B cell (primary cell): ENCODE measurements at regions of chr9 and their contacts with region 1.

Region 1: DNA sequence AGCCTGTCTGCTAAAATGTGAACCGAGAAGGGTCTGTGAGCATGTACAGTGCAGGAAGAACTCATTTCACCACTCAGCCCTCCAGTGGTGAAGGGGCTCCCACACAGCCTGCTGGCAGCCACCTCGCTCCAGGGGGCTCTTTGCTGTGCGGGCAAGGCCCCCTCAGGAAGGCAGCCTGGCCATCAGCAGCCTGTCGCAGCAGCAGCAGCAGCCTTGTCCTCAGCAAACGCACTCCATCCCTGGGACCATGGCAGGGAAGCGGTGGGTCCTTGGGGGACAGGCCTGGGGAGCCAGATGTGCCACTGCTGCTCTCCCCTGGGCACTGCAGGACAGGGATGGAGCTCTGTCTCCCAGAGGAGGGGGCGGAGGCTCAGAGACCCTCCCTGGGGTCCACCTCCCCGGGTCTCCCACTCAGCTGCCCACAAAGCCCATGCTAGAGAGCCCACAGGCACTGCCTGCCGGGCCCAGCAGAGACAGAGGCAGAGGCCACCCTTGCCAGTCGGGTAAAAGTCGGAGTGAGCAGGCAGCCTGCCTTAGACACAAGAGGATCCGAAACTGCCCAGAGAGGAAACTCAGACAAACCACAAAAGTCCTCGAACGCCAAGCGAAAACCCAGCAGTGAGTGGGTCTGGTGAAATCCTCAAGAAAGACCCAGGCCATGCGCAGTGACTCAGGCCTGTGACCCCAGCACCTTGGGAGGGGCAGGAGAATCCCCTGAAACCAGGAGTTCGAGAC is 8.0 kb downstream of the BRD3 start:
- DNase-seq: peak; percentile 87
- ATAC-seq: peak; percentile 94
- H3K4me3 ChIP-seq: peak overlapping the region in 4 of 5 experiments; percentile 1 to 23 (median 12)
- H3K4me3 Mint-ChIP-seq: peak overlapping the region; percentile 60
- H3K27ac ChIP-seq: peak overlapping the region in 1 of 2 donors; percentile 54
- H3K27ac Mint-ChIP-seq: peak overlapping the region; percentile 56
- H3K4me1 ChIP-seq: peaks cover 41 to 60% of the 10 kb centered on the region in 2 donors
- H3K4me1 Mint-ChIP-seq: peaks cover 71% of the 10 kb centered on the region
- H3K27me3 ChIP-seq: no peaks in the 10 kb centered on the region
- H3K27me3 Mint-ChIP-seq: no peaks in the 10 kb centered on the region
- CTCF ChIP-seq: peak; percentile 11

Region 2: GRCh38 chr9:134024828-134025605 is 34.8 kb before region 1 on chr9 and contains the start of gene BRD3OS:
- CTCF ChIA-PET with region 1: interaction called, 4 read pairs
- POLR2A ChIA-PET with region 1: interaction called, 4 read pairs
- intact Hi-C with region 1: loop called (anchors 2 kb)
- DNase-seq: peak; percentile 97
- ATAC-seq: peak; percentile 93
- H3K4me3 ChIP-seq: peak within 1 kb of the TSS; percentile 53 to 85 (median 76)
- H3K4me3 Mint-ChIP-seq: peak within 1 kb of the TSS; percentile 86
- H3K27ac ChIP-seq: peak within 1 kb of the TSS; percentile 34 to 69
- H3K27ac Mint-ChIP-seq: peak within 1 kb of the TSS; percentile 88
- H3K4me1 ChIP-seq: peaks cover 6 to 19% of the 10 kb centered on the region in 2 donors
- H3K4me1 Mint-ChIP-seq: peaks cover 11% of the 10 kb centered on the region
- H3K27me3 ChIP-seq: no peaks in the 10 kb centered on the region
- H3K27me3 Mint-ChIP-seq: no peaks in the 10 kb centered on the region
- CTCF ChIP-seq: no peak
- total RNA-seq, gene BRD3OS: 25.3 and 26.8 TPM in 2 replicates

Region 3: DNA sequence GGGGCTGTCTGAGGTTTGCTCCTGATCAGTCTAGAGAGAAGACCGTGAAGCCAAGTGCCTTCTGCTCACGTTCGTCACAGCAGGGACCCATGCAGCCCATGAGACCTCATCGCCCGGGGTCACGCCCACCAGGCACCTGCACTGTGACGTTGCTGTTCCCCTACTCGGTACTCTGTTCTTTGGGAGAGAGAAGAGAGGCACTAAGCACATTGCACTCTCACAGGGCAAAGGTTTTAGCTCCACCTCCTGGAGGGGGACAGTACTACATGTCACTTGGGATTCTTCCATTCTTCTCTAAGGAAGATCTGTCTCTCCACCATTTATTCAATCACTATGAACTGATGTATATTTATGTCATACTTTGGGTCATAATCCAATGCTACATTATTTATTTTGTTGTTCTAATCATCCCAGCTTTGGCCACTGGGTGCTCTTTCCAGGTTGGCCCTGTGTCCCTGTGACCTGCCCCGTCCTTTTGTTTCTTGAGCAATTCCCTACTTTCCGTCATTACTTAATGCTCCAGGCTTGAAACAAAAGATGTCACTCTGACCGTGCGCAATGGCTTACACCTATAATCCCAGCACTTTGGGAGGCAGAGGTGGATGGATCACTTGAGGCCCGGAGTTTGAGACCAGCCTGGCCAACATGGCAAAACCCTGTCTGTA is 39.4 kb after region 1 on chr9:
- CTCF ChIA-PET with region 1: no interaction called
- POLR2A ChIA-PET with region 1: no interaction called
- intact Hi-C with region 1: loop called (anchors 1 kb)
- DNase-seq: peak; percentile 80
- ATAC-seq: peak; percentile 92
- H3K4me3 ChIP-seq: no peak overlapping the region
- H3K4me3 Mint-ChIP-seq: no peak overlapping the region
- H3K27ac ChIP-seq: no peak overlapping the region
- H3K27ac Mint-ChIP-seq: no peak overlapping the region
- H3K4me1 ChIP-seq: no peaks in the 10 kb centered on the region
- H3K4me1 Mint-ChIP-seq: peaks cover 4% of the 10 kb centered on the region
- H3K27me3 ChIP-seq: peaks cover 0 to 3% (median 2%) of the 10 kb centered on the region in 4 experiments
- H3K27me3 Mint-ChIP-seq: peaks cover 21% of the 10 kb centered on the region
- CTCF ChIP-seq: peak; percentile 88

Region 4: GRCh38 chr9:134111064-134111463 is 51.2 kb after region 1 on chr9:
- CTCF ChIA-PET with region 1: no interaction called
- POLR2A ChIA-PET with region 1: no interaction called
- intact Hi-C with region 1: no loop called
- DNase-seq: no peak
- ATAC-seq: no peak
- H3K4me3 ChIP-seq: no peak overlapping the region
- H3K4me3 Mint-ChIP-seq: no peak overlapping the region
- H3K27ac ChIP-seq: no peak overlapping the region
- H3K27ac Mint-ChIP-seq: no peak overlapping the region
- H3K4me1 ChIP-seq: no peaks in the 10 kb centered on the region
- H3K4me1 Mint-ChIP-seq: no peaks in the 10 kb centered on the region
- H3K27me3 ChIP-seq: peaks cover 0 to 3% (median 0%) of the 10 kb centered on the region in 4 experiments
- H3K27me3 Mint-ChIP-seq: peaks cover 16% of the 10 kb centered on the region
- CTCF ChIP-seq: no peak